ENCODE measurements at regions of chr22 and their contacts with region 1.

Region 1: DNA sequence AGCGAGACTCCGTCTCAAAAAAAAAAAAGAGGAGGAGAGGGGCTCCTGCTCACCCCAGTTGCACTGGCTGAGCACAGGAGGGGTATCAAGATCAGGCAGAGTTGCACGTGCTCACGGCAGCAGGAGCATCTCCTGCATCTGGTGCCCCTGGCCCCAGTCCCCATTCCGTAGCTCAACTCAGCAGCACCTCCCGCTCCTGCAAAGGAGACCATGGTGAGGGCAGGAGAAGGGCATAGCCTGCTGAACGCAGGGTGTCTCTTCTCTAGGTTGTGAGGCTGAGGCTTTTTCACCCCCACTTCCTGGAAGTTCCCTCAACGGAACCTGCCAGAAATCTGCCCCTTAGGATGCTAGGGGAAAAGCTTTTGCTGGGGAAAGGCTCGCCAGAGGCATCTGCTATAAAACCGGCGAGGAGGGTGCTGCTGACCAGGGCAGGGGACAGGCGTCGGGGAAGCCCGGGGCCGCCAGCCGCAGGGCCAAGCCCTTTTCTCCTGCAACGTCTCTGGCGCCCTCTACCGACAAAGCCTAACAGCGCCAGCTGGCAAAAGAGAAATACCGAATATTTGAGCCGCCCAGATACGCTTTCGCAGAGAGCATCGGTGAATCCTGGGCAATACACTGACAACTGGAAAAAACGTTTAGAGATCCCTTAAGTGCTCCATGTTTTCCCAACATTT is 1.0 kb upstream of the PPP6R2 start:
- DNase-seq: no peak
- H3K4me3 ChIP-seq: peak overlapping the region; percentile 86 to 93
- H3K27ac ChIP-seq: peak overlapping the region; percentile 86
- H3K4me1 ChIP-seq: peaks cover 21% of the 10 kb centered on the region
- H3K27me3 ChIP-seq: no peaks in the 10 kb centered on the region
- CTCF ChIP-seq: peak; percentile 90 to 94 (median 94)
- POLR2A ChIP-seq: no peak

Region 2: DNA sequence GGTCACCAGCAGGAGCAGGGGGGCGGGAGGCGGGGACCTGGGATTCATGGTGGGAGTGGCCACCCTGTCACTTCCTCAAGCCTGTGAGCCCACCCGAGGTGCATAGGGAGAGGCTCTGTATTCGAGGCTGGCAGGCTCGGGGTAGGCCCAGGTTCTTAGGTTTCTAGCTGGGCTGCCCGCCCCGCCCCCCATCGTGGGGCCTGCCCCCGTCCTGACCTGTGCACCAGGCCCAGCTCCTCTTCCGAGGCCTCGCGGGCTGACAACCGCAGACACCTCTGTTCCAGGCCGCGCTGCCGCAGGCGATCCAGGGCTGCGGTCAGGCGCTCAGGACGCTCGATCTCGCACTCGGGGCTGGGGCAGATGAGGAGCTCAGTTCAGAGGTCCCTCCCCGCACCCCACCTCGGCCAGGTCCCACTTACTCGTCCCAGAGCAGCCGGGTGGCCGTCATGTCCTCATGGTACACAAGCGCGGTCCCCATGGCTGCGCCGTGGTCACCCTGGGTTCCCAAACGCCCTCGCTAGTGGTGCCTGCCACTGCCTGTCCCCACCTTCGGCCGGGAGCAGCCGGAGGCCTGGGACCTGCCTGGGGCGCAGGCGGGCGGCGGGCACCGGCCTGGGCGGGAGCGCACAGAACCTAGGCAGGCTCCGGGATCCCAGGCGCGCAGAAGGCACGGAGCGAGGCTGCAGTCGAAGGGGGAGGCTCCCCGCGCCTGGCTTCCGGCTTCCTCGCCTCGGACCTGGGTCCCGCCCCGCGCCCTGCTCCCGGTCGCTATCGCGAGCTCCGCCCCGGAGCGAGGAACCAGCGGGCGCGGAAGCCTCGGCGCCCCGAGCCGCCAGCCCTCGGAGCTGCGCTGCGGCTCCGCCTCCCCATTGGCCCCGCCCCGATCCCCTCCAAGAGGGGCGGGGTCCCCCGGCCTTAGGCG is 91.3 kb before region 1 on chr22 and contains the start of gene HDAC10:
- intact Hi-C with region 1: loop called (anchors 5 kb)
- DNase-seq: no peak
- H3K4me3 ChIP-seq: peak within 1 kb of the TSS; percentile 60 to 88
- H3K27ac ChIP-seq: peak within 1 kb of the TSS; percentile 79
- H3K4me1 ChIP-seq: peaks cover 50% of the 10 kb centered on the region
- H3K27me3 ChIP-seq: no peaks in the 10 kb centered on the region
- CTCF ChIP-seq: no peak
- POLR2A ChIP-seq: no peak
- total RNA-seq, gene HDAC10: 29.2 TPM

Region 3: GRCh38 chr22:50282361-50282760 is 59.8 kb before region 1 on chr22:
- intact Hi-C with region 1: loop called (anchors 5 kb)
- DNase-seq: no peak
- H3K4me3 ChIP-seq: no peak overlapping the region
- H3K27ac ChIP-seq: peak overlapping the region; percentile 65
- H3K4me1 ChIP-seq: peaks cover 12% of the 10 kb centered on the region
- H3K27me3 ChIP-seq: no peaks in the 10 kb centered on the region
- CTCF ChIP-seq: no peak
- POLR2A ChIP-seq: no peak